Activated CD4-positive, alpha-beta T cell treated with anti-CD3 and anti-CD28 coated beads for 36 hours (primary cell): ENCODE measurements at regions of chr5 and their contacts with region 1.

Region 1: GRCh38 chr5:157761690-157762621 is 18.4 kb downstream of the LSM11 start:
- DNase-seq: peak; percentile 27
- ATAC-seq: peak; percentile 91
- H3K4me3 Mint-ChIP-seq: no peak overlapping the region
- H3K27ac Mint-ChIP-seq: no peak overlapping the region
- H3K4me1 Mint-ChIP-seq: peaks cover 7% of the 10 kb centered on the region
- H3K27me3 Mint-ChIP-seq: no peaks in the 10 kb centered on the region

Region 2: GRCh38 chr5:157486221-157486681 is 275.7 kb before region 1 on chr5:
- CTCF ChIA-PET with region 1: no interaction called
- POLR2A ChIA-PET with region 1: no interaction called
- intact Hi-C with region 1: no loop called
- DNase-seq: no peak
- ATAC-seq: peak; percentile 33
- H3K4me3 Mint-ChIP-seq: no peak overlapping the region
- H3K27ac Mint-ChIP-seq: no peak overlapping the region
- H3K4me1 Mint-ChIP-seq: peaks cover 11% of the 10 kb centered on the region
- H3K27me3 Mint-ChIP-seq: no peaks in the 10 kb centered on the region

Region 3: GRCh38 chr5:157748760-157749461 is 13.0 kb before region 1 on chr5:
- CTCF ChIA-PET with region 1: interaction called, 14 read pairs
- POLR2A ChIA-PET with region 1: interaction called, 3 read pairs
- intact Hi-C with region 1: no loop called
- DNase-seq: peak; percentile 36
- ATAC-seq: peak; percentile 34
- H3K4me3 Mint-ChIP-seq: no peak overlapping the region
- H3K27ac Mint-ChIP-seq: peak overlapping the region; percentile 32
- H3K4me1 Mint-ChIP-seq: peaks cover 49% of the 10 kb centered on the region
- H3K27me3 Mint-ChIP-seq: no peaks in the 10 kb centered on the region

Region 4: DNA sequence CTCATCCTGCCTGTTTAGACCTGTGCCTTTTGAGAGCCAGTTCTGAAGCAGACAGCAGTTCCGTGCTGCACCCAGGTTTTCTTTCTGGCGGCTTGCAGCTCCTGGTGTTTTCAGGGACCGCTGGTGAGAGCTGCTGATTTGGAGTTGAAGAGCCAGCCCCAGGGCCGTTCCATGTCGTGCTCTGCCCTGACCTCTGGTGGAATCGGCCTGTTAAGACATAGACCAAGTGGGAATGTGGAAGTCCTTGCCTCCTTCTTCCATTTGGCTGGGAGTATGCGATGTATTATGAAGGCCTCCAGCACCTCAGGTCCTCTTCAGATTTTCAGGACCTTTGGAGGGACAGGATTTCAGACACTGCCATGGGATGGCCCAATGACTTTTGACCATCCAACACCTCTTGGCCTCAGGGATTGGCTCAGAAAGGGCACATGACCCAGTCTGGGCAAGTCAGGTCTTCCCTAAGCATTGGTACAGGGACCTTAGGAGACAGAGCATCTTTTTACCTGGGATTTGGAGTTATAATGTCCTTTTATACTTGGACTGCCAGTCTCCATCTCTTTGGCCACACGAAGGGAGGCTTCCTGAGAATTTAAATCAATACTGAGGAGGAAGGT is 233.1 kb after region 1 on chr5:
- CTCF ChIA-PET with region 1: interaction called, 13 read pairs
- POLR2A ChIA-PET with region 1: no interaction called
- intact Hi-C with region 1: loop called (anchors 1 kb)
- DNase-seq: peak; percentile 70
- ATAC-seq: peak; percentile 93
- H3K4me3 Mint-ChIP-seq: peak overlapping the region; percentile 14
- H3K27ac Mint-ChIP-seq: no peak overlapping the region
- H3K4me1 Mint-ChIP-seq: peaks cover 11% of the 10 kb centered on the region
- H3K27me3 Mint-ChIP-seq: peaks cover 20% of the 10 kb centered on the region

Region 5: DNA sequence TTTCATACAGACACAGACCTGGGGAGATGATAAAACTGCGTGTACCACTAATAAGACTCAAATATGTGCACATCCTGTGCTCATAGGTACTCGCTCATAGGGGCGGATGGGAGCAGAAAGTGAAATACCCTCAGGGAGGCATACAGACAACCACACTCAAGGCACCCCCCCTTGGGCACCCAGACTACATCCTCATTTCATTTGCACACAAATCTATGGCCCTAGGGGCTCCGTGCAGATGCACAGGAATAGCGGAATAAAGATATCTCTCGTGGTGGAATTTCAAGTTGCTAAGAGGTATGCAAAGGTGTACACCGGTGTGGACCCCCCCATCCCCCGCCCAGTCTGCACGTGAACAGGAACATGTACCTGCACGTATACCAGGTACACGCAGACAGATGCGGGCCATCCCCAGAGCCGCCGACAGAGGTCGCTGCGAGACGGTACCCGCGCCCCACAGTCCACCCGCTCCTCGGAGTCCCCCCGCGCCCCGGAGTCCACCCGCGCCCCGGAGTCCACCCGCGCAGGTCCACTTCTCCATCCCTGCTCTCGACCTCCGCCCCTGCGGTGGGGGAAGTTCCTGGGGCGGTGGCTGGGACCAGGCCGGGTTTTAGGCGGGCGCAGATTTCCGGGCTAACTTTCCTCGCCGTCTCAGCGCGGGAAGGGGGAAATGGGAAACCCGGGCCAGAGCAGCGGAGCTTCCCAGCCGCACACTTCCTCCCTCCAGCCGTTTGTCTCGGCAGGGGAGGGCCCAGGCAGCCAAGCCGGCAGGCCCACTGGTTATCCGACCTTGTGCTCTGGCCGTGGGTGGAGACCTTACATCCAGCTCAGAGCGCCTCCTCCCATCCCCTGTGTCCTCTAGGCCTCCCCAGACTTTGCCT is 1569.4 kb after region 1 on chr5:
- CTCF ChIA-PET with region 1: no interaction called
- POLR2A ChIA-PET with region 1: no interaction called
- intact Hi-C with region 1: no loop called
- DNase-seq: peak; percentile 86
- ATAC-seq: peak; percentile 96
- H3K4me3 Mint-ChIP-seq: peak overlapping the region; percentile 62
- H3K27ac Mint-ChIP-seq: peak overlapping the region; percentile 76
- H3K4me1 Mint-ChIP-seq: peaks cover 15% of the 10 kb centered on the region
- H3K27me3 Mint-ChIP-seq: peaks cover 2% of the 10 kb centered on the region